Calu3 (cell line): ENCODE measurements at regions of chr5 and their contacts with region 1.

Region 1: DNA sequence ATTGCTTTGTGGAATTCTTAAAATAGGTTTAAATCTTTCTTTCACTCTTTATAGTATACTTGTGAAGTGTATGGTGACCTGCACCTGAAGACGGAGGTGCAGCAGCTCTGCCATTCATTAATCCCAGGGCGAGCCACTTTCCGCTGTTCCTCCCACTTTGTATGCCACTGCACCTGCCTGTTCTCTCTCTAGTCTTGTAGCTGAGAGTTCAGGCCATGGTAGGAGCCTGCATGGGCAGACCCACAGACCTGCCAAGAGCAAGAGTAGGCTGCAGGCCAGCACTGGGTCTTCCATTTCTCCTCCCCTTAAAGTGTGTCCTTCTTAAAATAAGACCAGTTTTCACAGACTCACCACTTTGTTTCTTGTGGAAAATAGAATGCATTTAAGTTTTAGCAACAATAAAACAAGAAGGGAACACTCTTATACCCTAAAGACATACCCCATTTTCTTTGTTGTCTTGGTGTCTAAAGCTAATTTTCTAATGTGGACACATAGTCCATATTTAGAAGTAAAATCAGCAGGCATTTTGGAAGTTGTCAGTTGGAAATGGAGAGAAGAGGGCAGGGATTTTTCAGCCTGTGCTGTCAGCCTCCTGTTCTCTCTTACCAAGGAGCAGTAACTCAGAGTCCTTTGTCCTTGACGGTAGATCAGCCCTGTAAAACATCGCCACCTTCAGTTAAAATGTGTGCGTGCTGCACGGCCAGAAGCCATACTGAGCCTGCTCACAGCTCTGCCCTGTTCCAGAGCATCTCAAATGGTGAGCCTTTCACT is 103.2 kb downstream of the SNCAIP start:
- DNase-seq: peak; percentile 63
- H3K4me3 Mint-ChIP-seq: no peak overlapping the region
- H3K27ac Mint-ChIP-seq: no peak overlapping the region
- H3K4me1 Mint-ChIP-seq: peaks cover 20% of the 10 kb centered on the region
- H3K27me3 Mint-ChIP-seq: peaks cover 36% of the 10 kb centered on the region
- CTCF ChIP-seq: peak; percentile 62

Region 2: GRCh38 chr5:122192497-122193496 is 222.4 kb before region 1 on chr5:
- CTCF ChIA-PET with region 1: interaction called, 12 read pairs
- intact Hi-C with region 1: loop called (anchors 1 kb)
- DNase-seq: peak; percentile 62
- H3K4me3 Mint-ChIP-seq: no peak overlapping the region
- H3K27ac Mint-ChIP-seq: no peak overlapping the region
- H3K4me1 Mint-ChIP-seq: no peaks in the 10 kb centered on the region
- H3K27me3 Mint-ChIP-seq: peaks cover 3% of the 10 kb centered on the region
- CTCF ChIP-seq: peak; percentile 65

Region 3: DNA sequence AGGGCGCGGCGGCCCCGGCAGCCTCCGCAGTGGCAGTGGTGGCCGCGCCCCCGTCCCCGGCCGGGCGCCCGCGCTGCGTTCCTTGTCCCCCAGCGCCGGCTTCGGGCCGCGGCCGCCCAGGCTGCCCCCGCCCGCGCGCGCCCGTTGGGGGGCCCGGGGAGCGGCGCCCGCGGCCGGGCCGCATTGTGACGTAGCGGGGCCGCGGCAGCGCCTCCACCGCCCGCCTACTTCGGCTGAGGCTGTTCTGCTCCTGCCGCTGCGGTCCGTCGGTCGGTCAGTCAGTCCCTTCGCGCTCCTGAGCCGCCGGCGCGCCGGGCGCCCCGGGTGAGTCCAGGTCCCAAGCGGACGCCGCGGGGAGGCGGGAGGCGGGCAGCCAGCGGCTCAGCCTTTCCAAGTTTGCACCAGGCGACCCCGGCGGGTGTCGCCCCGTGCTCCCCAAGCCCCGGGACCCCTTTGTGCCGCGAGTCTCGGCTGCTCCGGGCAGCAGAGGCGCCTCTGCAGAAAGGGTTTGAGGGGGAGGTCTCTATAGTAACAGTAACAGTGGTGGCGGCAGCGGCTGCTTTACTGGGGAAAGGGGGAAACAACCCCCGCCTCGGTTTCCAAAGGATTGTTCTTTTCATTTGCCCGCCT is 103.1 kb before region 1 on chr5 and contains the start of gene SNCAIP:
- CTCF ChIA-PET with region 1: no interaction called
- intact Hi-C with region 1: loop called (anchors 5 kb)
- DNase-seq: peak; percentile 60
- H3K4me3 Mint-ChIP-seq: peak within 1 kb of the TSS; percentile 75
- H3K27ac Mint-ChIP-seq: no peak within 1 kb of the TSS
- H3K4me1 Mint-ChIP-seq: peaks cover 13% of the 10 kb centered on the region
- H3K27me3 Mint-ChIP-seq: peaks cover 71% of the 10 kb centered on the region
- CTCF ChIP-seq: no peak
- total RNA-seq, gene SNCAIP: 0.22 TPM in 1 of 2 replicates, not detected in the other